ENCODE measurements at regions of chr7 and their contacts with region 1.

Region 1: DNA sequence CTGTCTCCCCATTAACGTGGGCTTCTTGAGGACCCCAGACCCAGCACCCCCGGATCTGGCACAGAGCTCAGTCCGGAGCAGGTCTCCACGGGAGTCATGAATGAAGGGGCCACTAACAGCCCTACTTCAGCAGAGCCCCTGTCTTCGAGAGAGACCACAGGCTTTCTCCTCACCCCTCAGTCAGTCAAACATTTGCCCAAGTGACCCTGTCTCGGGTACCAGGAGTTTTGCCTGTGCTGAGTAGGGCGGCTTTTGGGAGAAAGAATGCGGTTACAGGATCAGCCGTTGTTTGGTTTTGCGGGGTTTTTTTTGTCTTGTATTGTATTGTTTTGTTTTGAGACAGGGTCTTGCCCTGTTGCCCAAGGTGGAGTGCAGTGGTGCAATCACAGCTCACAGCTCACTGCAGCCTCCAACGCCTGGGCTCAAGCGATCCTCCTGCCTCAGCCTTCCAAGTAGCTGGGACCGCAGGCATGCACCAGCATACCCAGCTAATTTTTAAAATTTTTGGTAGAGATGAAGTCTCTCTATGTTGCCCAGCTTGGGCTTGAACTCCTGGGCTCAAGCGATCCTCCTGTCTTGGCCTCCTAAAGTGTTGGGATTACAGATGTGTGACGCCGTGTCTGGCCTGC is 16.5 kb downstream of the ADAP1 start:
- DNase-seq: no peak
- CTCF ChIP-seq: no peak

Region 2: DNA sequence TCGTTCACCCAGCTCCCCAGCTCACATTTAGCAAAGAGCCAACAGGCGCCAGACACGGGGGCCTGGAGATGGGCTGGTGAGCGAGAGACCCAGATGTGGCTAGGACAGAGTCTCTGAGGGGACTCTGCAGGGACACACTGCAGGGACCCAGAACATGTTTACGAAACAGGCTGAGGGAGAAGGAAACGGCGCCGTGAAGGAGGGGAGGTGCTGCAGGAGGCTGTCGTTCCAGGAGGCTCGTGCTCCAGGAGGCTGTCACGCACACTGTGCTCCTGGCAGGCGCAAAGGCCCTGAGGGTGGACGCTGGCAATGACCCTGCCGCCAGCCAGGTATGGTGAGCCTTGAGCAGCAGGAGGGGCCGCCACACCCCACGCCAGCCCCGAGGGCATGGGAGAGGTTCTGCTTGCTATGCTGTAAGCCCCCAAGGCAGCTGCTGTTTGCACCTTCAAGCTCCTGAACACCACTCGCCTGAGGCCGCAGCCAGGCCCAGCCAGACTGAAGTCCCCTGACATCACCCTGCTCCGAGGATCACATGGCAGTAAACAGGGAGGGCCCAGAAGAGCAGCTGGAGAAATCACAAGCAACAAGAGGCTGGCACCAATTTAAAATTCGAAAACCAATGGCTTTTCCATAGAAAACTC is 10.8 kb before region 1 on chr7:
- CTCF ChIA-PET with region 1: interaction called, 10 read pairs
- POLR2A ChIA-PET with region 1: no interaction called
- DNase-seq: no peak
- CTCF ChIP-seq: no peak

Region 3: DNA sequence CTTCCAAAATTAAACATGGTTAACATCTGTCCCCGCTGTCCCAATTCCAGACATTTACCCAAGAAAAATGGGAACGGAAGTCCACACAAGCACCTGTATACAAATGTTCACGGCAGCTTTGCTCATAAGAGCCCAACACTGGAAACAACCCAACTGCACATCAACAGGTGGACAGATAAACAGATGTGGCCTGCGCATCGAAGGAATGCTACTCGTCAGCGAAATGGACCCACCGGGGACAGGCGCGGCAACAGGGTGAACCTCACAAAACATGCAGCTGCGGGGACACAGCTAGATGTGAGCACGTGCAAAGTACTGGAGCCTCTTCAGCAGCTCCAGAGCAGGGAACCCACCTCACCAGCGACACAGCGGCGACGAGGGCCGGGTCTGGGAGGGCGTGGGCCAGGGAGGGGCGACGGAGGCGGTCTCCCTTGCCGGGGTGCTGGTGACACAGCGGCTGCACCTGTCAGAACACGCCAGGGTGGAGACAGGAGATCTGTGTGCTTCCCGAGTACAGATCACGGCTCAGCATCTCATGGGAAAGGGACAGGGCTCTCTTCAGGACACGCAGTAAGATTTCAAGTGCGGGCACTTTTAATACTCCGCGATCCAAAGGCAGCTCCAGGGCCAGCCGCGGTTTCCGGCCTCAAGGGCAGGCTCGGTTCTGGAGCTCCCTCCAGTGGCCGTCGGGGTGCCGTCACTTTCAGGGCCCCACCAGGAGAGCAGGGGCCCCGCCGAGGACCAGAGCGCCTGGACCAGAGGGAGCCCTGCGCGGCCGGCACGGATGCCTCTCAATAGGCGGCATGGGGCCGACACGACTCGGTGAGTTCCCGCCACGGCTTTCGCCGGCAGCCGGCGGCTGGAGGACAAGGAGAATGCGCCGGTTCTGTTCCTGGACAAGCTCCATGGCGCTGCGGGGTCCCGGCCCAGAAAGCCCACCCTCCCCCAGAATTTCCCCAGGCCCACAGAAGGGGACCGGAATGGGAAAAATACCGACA is 127.6 kb after region 1 on chr7:
- CTCF ChIA-PET with region 1: no interaction called
- POLR2A ChIA-PET with region 1: no interaction called
- DNase-seq: peak; percentile 92
- CTCF ChIP-seq: peak; percentile 94

Measured in GM10248 (cell line).